ENCODE measurements at regions of chr17 and their contacts with region 1.

Region 1: DNA sequence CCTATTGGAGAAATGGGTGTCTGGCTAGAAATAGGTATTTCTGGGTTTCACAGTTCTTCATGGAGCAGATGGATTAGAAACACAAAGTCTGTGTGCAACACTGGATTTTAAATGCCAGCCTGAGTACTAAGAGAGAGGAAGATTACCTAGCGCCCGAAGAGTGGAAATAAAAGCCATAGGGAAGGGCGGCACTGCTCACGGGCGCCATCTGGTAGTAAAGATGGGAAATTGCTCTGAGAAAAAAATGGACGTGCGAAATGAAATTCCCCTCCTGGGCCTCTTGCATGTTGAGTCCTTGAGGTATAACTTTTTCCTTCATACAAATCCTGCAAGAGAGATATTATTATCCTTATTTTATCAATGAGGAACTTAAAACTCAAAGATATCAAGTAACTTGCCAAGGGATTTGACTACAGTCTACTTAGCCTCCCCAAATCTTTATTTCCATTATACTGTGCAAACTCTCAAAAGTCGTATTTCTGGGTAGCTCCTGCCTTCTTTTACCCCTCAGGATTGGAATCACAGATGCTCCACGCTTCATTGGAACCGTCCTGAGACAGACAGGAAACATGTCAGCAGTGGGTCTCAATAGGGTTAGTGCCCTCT is 72.8 kb downstream of the MMD start:
- DNase-seq: peak; percentile 72
- H3K4me3 ChIP-seq: no peak overlapping the region
- H3K27ac ChIP-seq: no peak overlapping the region
- H3K4me1 ChIP-seq: peaks cover 0 to 17% (median 0%) of the 10 kb centered on the region in 4 donors
- H3K27me3 ChIP-seq: no peaks in the 10 kb centered on the region
- CTCF ChIP-seq: peak; percentile 64 to 84 (median 76)
- EP300 ChIP-seq: no peak
- POLR2A ChIP-seq: no peak

Region 2: GRCh38 chr17:54813896-54814295 is 535.0 kb before region 1 on chr17:
- intact Hi-C with region 1: no loop called
- DNase-seq: no peak
- H3K4me3 ChIP-seq: no peak overlapping the region
- H3K27ac ChIP-seq: no peak overlapping the region
- H3K4me1 ChIP-seq: no peaks in the 10 kb centered on the region
- H3K27me3 ChIP-seq: no peaks in the 10 kb centered on the region
- CTCF ChIP-seq: no peak
- EP300 ChIP-seq: no peak
- POLR2A ChIP-seq: no peak

Region 3: DNA sequence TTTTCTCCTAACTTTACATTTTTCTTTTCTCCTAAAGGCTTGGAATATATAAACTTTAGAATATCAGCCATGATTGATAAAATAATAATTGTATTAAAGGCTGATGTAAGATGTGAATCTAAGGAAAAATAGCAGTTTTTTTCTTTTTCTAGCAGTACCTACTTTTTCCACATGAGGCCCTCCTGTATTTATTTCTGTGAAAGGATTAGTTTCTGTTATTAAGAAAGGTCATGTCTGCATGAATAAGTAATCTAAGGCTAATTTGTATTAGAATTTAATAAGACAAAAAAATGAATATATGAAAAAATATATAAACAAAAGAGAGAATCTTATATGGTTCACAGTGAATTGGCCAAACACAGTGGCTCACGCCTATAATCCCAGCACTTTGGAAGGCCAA is 295.0 kb before region 1 on chr17:
- intact Hi-C with region 1: loop called (anchors 5 kb)
- DNase-seq: no peak
- H3K4me3 ChIP-seq: no peak overlapping the region
- H3K27ac ChIP-seq: no peak overlapping the region
- H3K4me1 ChIP-seq: no peaks in the 10 kb centered on the region
- H3K27me3 ChIP-seq: no peaks in the 10 kb centered on the region
- CTCF ChIP-seq: no peak
- EP300 ChIP-seq: no peak
- POLR2A ChIP-seq: no peak

Region 4: GRCh38 chr17:55295411-55296170 is 53.3 kb before region 1 on chr17:
- intact Hi-C with region 1: loop called (anchors 5 kb)
- DNase-seq: peak; percentile 82
- H3K4me3 ChIP-seq: no peak overlapping the region
- H3K27ac ChIP-seq: peak overlapping the region; percentile 1 to 82 (median 38)
- H3K4me1 ChIP-seq: peaks cover 0 to 32% (median 24%) of the 10 kb centered on the region in 4 donors
- H3K27me3 ChIP-seq: no peaks in the 10 kb centered on the region
- CTCF ChIP-seq: peak; percentile 77 to 88 (median 78)
- EP300 ChIP-seq: no peak
- POLR2A ChIP-seq: no peak

Region 5: GRCh38 chr17:55452139-55452790 is 103.4 kb after region 1 on chr17:
- intact Hi-C with region 1: loop called (anchors 5 kb)
- DNase-seq: peak; percentile 89
- H3K4me3 ChIP-seq: no peak overlapping the region
- H3K27ac ChIP-seq: peak overlapping the region; percentile 67 to 83 (median 78)
- H3K4me1 ChIP-seq: peaks cover 0 to 65% (median 56%) of the 10 kb centered on the region in 4 donors
- H3K27me3 ChIP-seq: no peaks in the 10 kb centered on the region
- CTCF ChIP-seq: no peak
- EP300 ChIP-seq: peak in 3 of 4 donors; percentile 18 to 35 (median 34)
- POLR2A ChIP-seq: no peak